HEK293 (cell line): ENCODE measurements at regions of chr12 and their contacts with region 1.

Region 1: GRCh38 chr12:108950991-108951739 is 69.7 kb downstream of the SVOP start:
- H3K4me3 ChIP-seq: no peak overlapping the region
- H3K27ac ChIP-seq: no peak overlapping the region
- H3K4me1 ChIP-seq: 0 out of 2 replicates have a peak, but pooled peaks cover 6% of the 10 kb centered on the region
- CTCF ChIP-seq: 0 out of 2 replicates have a peak, but pooled peaks have one; percentile 42

Region 2: GRCh38 chr12:108884116-108885012 is 66.8 kb before region 1 on chr12:
- CTCF ChIA-PET with region 1: interaction called, 19 read pairs
- POLR2A ChIA-PET with region 1: no interaction called
- H3K4me3 ChIP-seq: no peak overlapping the region
- H3K27ac ChIP-seq: no peak overlapping the region
- H3K4me1 ChIP-seq: no peaks in the 10 kb centered on the region
- CTCF ChIP-seq: peak; percentile 56

Region 3: GRCh38 chr12:108930756-108931155 is 20.4 kb before region 1 on chr12:
- CTCF ChIA-PET with region 1: interaction called, 14 read pairs
- POLR2A ChIA-PET with region 1: no interaction called
- H3K4me3 ChIP-seq: no peak overlapping the region
- H3K27ac ChIP-seq: no peak overlapping the region
- H3K4me1 ChIP-seq: no peaks in the 10 kb centered on the region
- CTCF ChIP-seq: no peak

Region 4: GRCh38 chr12:108939594-108939993 is 11.6 kb before region 1 on chr12:
- CTCF ChIA-PET with region 1: interaction called, 13 read pairs
- POLR2A ChIA-PET with region 1: interaction called, 3 read pairs
- H3K4me3 ChIP-seq: no peak overlapping the region
- H3K27ac ChIP-seq: no peak overlapping the region
- H3K4me1 ChIP-seq: no peaks in the 10 kb centered on the region
- CTCF ChIP-seq: no peak